Psoas muscle (tissue), 8 donors: ENCODE measurements at regions of chr22 and their contacts with region 1.

Region 1: GRCh38 chr22:23786752-23787599 is at the start of gene SMARCB1:
- DNase-seq: peak; percentile 94 to 96
- ATAC-seq: peak; percentile 90 to 92 (median 92)
- H3K4me3 ChIP-seq: peak within 1 kb of the TSS; percentile 92
- H3K27ac ChIP-seq: peak within 1 kb of the TSS; percentile 99
- H3K4me1 ChIP-seq: peaks cover 32% of the 10 kb centered on the region
- H3K27me3 ChIP-seq: no peaks in the 10 kb centered on the region
- CTCF ChIP-seq: no peak
- total RNA-seq, gene SMARCB1: 21.9 to 76.6 (median 48.3) TPM

Region 2: GRCh38 chr22:23772649-23773495 is 14.1 kb before region 1 on chr22 and contains the start of gene MMP11:
- intact Hi-C with region 1: no loop called
- DNase-seq: peak; percentile 71 to 77
- ATAC-seq: peak in 1 of 4 donors; percentile 9
- H3K4me3 ChIP-seq: peak within 1 kb of the TSS; percentile 68
- H3K27ac ChIP-seq: no peak within 1 kb of the TSS
- H3K4me1 ChIP-seq: peaks cover 15% of the 10 kb centered on the region
- H3K27me3 ChIP-seq: no peaks in the 10 kb centered on the region
- CTCF ChIP-seq: no peak
- total RNA-seq, gene MMP11: 1.3 to 2.9 (median 1.5) TPM

Region 3: DNA sequence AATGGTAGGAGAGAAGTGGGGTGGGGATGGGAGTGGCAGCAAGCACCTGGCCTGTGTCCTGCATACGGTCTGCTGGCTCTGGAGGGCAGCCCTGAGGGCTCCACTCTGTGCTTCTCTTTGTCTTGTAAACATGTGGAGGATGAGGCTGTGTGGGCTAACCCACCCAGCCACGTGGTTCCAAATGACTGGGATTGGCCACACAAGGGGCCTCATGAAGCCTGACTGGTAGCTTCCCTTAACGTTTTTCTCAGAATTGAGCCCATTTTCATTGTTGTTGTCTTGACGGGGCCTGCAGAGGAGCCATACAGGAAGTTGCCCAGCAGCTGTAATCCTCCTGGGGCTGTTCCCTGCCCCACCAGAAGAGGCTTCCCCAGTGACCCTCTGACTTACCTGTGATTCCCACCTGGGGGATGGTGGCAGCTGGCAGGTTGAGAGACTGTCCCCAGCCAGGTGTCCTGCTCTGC is 33.8 kb after region 1 on chr22:
- intact Hi-C with region 1: loop called (anchors 5 kb)
- DNase-seq: no peak
- ATAC-seq: no peak
- H3K4me3 ChIP-seq: no peak overlapping the region
- H3K27ac ChIP-seq: no peak overlapping the region
- H3K4me1 ChIP-seq: peaks cover 10% of the 10 kb centered on the region
- H3K27me3 ChIP-seq: no peaks in the 10 kb centered on the region
- CTCF ChIP-seq: no peak

Region 4: DNA sequence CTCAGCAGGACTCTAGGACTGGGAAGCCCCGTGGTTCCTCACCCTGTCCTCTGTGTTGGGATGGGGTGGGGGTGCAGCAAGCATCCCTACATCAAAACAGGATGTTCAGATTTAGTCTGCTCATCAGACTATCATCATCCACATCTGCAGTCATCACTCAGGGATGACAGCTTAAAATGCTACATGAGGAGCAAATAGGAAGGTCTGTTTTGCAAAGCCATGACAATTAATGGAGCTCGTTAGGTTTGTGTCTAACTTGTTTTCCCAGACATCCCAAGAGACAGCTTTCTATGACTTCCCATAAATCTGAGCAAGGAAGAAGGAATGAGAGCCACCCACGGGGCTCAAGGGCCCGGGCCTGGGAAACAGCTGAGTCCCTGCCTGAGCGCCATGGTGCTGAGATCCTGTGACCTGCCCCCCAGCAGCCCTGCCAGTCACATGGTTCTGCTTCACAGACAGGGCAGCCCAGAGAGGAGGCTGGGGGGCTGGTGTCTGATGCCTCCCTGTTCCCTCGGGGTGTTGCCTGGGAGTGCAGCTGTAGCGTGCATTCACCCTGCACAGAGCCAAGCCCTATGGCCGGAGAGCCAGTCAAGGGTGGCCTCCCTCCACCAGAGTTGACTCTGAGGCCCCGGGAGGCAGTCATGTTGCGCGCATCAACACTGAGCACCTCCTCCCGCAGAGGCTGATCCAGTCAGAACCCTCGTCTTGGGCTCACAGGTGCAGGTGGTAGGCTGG is 39.7 kb after region 1 on chr22:
- intact Hi-C with region 1: loop called (anchors 5 kb)
- DNase-seq: peak in 1 of 2 donors; percentile 54
- ATAC-seq: no peak
- H3K4me3 ChIP-seq: no peak overlapping the region
- H3K27ac ChIP-seq: peak overlapping the region; percentile 36
- H3K4me1 ChIP-seq: peaks cover 27% of the 10 kb centered on the region
- H3K27me3 ChIP-seq: no peaks in the 10 kb centered on the region
- CTCF ChIP-seq: no peak

Region 5: GRCh38 chr22:23913661-23914353 is 126.8 kb after region 1 on chr22:
- intact Hi-C with region 1: no loop called
- DNase-seq: peak; percentile 100
- ATAC-seq: peak; percentile 99 to 100 (median 100)
- H3K4me3 ChIP-seq: peak overlapping the region; percentile 70
- H3K27ac ChIP-seq: peak overlapping the region; percentile 82
- H3K4me1 ChIP-seq: no peaks in the 10 kb centered on the region
- H3K27me3 ChIP-seq: no peaks in the 10 kb centered on the region
- CTCF ChIP-seq: no peak